B cell (primary cell): ENCODE measurements at regions of chr19 and their contacts with region 1.

Region 1: GRCh38 chr19:49911381-49912145 is 14.9 kb upstream of the IL4I1 start:
- DNase-seq: peak; percentile 75
- ATAC-seq: peak; percentile 63
- H3K4me3 ChIP-seq: no peak overlapping the region
- H3K4me3 Mint-ChIP-seq: peak overlapping the region; percentile 71
- H3K27ac ChIP-seq: peak overlapping the region; percentile 60 to 82
- H3K27ac Mint-ChIP-seq: peak overlapping the region; percentile 93
- H3K4me1 ChIP-seq: peaks cover 33 to 42% of the 10 kb centered on the region in 2 donors
- H3K4me1 Mint-ChIP-seq: peaks cover 66% of the 10 kb centered on the region
- H3K27me3 ChIP-seq: no peaks in the 10 kb centered on the region
- H3K27me3 Mint-ChIP-seq: no peaks in the 10 kb centered on the region
- CTCF ChIP-seq: no peak

Region 2: GRCh38 chr19:49889687-49890348 is 21.7 kb before region 1 on chr19:
- CTCF ChIA-PET with region 1: interaction called, 17 read pairs
- POLR2A ChIA-PET with region 1: interaction called, 9 read pairs
- intact Hi-C with region 1: no loop called
- DNase-seq: peak; percentile 88
- ATAC-seq: peak; percentile 68
- H3K4me3 ChIP-seq: peak overlapping the region in 4 of 5 experiments; percentile 41 to 62 (median 50)
- H3K4me3 Mint-ChIP-seq: peak overlapping the region; percentile 86
- H3K27ac ChIP-seq: no peak overlapping the region
- H3K27ac Mint-ChIP-seq: peak overlapping the region; percentile 67
- H3K4me1 ChIP-seq: peaks cover 3 to 17% of the 10 kb centered on the region in 2 donors
- H3K4me1 Mint-ChIP-seq: peaks cover 27% of the 10 kb centered on the region
- H3K27me3 ChIP-seq: no peaks in the 10 kb centered on the region
- H3K27me3 Mint-ChIP-seq: no peaks in the 10 kb centered on the region
- CTCF ChIP-seq: peak; percentile 89

Region 3: DNA sequence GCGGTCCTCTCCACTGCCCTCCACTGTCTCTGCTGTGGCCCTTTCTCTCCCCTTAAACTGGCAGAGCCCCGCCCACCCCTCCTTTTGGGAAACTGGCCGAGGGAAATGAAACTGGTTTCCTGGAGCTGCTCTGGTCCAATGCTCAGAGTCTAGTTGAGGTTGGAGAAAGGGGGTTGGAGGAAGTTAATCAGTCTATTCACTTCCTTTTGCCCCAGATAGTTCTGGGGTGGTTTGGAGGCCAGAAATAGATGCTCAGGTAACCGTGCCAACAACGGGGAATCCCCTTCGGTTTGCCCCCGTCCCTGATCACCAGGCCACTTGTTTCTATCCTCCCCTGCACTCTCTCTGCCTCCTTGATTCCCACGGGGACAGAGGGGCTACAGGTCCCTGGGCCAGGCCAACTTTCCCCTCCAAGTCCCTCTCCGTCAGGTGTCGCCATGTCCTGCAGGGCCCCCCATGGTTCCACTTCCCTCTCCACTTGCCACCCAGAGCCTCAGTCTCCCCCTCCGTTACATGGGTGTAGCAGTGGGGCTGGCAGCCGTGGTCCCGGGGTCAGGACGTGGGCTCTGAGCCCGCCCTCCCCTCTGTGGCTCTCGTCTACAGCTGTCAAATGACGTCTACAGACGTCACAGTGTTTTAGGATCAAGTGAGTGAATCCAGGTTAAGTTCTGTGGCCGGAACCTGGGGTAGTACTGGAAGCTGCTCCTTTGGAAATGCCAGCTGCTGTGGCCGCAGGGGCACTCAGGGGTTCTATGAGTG is 14.5 kb before region 1 on chr19 and contains the start of gene IL4I1:
- CTCF ChIA-PET with region 1: interaction called, 17 read pairs
- POLR2A ChIA-PET with region 1: interaction called, 20 read pairs
- intact Hi-C with region 1: loop called (anchors 2 kb)
- DNase-seq: peak; percentile 91
- ATAC-seq: peak; percentile 74
- H3K4me3 ChIP-seq: peak within 1 kb of the TSS; percentile 34 to 60 (median 44)
- H3K4me3 Mint-ChIP-seq: peak within 1 kb of the TSS; percentile 89
- H3K27ac ChIP-seq: peak within 1 kb of the TSS; percentile 82 to 84
- H3K27ac Mint-ChIP-seq: peak within 1 kb of the TSS; percentile 97
- H3K4me1 ChIP-seq: peaks cover 30 to 39% of the 10 kb centered on the region in 2 donors
- H3K4me1 Mint-ChIP-seq: peaks cover 40% of the 10 kb centered on the region
- H3K27me3 ChIP-seq: no peaks in the 10 kb centered on the region
- H3K27me3 Mint-ChIP-seq: no peaks in the 10 kb centered on the region
- CTCF ChIP-seq: no peak
- total RNA-seq, gene IL4I1: 3.1 and 3.9 TPM in 2 replicates